Naive thymus-derived CD4-positive, alpha-beta T cell (primary cell): ENCODE measurements at regions of chr12 and their contacts with region 1.

Region 1: DNA sequence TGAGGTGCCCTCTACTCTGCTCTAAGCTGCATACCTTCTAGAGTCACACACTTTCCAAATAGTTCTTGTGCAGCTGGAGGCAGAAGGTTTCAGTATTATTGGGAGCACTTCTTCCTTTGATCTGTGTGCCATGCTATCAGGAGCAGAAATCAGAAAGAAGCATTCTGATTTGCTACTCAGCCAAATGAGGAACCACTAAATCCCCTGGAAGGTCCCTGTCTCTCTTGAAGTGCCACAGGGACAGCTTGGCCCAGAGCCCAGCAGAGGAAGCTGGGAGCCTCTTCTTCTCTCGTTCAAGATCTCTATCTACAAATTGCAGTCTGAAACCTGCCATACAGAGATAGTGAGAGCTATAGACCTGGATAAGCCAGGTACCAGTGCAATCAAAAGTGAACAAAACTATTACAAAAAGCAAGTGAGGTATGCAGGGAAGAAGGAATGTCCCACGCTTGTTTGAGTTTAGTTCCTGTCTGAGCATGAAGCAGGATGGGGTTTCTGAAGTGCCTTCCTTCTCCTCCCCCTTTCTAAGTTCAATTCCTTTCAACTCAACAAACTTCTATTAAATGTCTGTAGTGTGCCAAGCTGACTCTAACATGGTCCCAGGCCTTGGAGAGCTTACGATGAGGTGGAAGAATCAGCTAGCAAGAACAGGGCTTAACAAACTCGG is 100.9 kb upstream of the PARP11 start:
- DNase-seq: peak in 6 of 9 donors; percentile 23 to 38 (median 32)
- ATAC-seq: peak; percentile 48
- H3K4me3 ChIP-seq: no peak overlapping the region
- H3K4me3 Mint-ChIP-seq: peak overlapping the region; percentile 49 to 84 (median 78)
- H3K27ac ChIP-seq: peak overlapping the region; percentile 60
- H3K27ac Mint-ChIP-seq: peak overlapping the region; percentile 76 to 97 (median 89)
- H3K4me1 ChIP-seq: peaks cover 26 to 66% of the 10 kb centered on the region in 2 donors
- H3K4me1 Mint-ChIP-seq: peaks cover 45 to 84% (median 76%) of the 10 kb centered on the region in 7 donors
- H3K27me3 ChIP-seq: no peaks in the 10 kb centered on the region
- H3K27me3 Mint-ChIP-seq: no peaks in the 10 kb centered on the region

Region 2: DNA sequence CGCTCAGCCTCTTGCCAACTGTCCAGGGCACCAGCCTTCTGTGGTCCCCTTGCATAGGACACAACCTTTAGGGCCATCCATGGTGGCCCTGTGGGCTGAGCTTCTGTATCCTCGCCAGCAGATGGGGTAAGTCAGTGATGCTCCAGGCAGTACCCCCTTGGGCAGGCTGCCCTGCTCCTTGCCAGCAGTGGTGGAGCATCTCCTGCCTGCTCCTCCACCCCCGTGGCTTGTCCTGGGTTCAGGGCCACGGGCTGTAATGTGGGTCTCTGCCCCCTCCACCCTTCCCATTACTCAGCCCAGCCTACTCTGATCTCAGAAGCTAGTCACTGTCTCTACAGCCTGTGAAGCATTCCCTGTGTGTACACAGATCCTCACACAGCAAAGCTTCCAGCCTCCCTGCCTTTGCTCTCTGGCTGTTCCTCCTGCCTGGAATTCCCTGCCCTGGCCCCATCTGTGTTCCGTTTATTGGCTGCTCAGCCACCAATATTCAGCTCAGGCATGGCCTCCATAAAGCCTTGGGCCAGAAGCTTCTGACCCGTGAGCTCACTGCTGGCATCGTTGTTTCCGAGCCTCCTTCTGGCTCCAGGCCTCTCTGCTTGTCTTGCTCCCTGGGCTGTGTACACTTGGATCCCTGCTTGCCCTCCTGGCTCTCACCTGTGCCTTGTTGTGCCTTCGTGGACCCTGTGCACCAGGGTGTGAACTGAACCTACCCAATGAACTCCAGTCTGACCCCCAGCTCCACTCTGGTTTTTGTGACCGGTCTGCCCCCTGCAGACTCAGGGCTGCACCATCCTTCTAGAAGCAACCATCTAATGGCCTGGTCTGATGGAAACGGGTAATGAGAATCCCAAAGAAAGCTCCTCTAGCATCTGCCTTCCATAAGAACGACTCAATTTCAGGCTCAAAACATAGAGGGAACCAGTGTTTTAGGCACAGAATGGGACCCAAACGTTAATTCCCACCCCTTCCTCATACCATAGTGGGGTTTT is 660.1 kb before region 1 on chr12:
- CTCF ChIA-PET with region 1: no interaction called
- POLR2A ChIA-PET with region 1: no interaction called
- intact Hi-C with region 1: no loop called
- DNase-seq: peak in 3 of 9 donors; percentile 12 to 16 (median 16)
- ATAC-seq: no peak
- H3K4me3 ChIP-seq: no peak overlapping the region
- H3K4me3 Mint-ChIP-seq: no peak overlapping the region
- H3K27ac ChIP-seq: no peak overlapping the region
- H3K27ac Mint-ChIP-seq: peak overlapping the region in 1 of 9 donors; percentile 51
- H3K4me1 ChIP-seq: no peaks in the 10 kb centered on the region
- H3K4me1 Mint-ChIP-seq: no peaks in the 10 kb centered on the region
- H3K27me3 ChIP-seq: no peaks in the 10 kb centered on the region
- H3K27me3 Mint-ChIP-seq: peaks cover 0 to 8% (median 5%) of the 10 kb centered on the region in 5 donors

Region 3: GRCh38 chr12:4030929-4031702 is 57.0 kb after region 1 on chr12:
- CTCF ChIA-PET with region 1: no interaction called
- POLR2A ChIA-PET with region 1: interaction called, 10 read pairs
- intact Hi-C with region 1: loop called in 1 of 2 experiments (anchors 2 kb)
- DNase-seq: peak; percentile 62 to 83 (median 74)
- ATAC-seq: peak; percentile 95
- H3K4me3 ChIP-seq: peak overlapping the region; percentile 50
- H3K4me3 Mint-ChIP-seq: peak overlapping the region; percentile 60 to 87 (median 84)
- H3K27ac ChIP-seq: peak overlapping the region; percentile 75
- H3K27ac Mint-ChIP-seq: peak overlapping the region in 8 of 9 donors; percentile 60 to 92 (median 86)
- H3K4me1 ChIP-seq: peaks cover 13 to 33% of the 10 kb centered on the region in 2 donors
- H3K4me1 Mint-ChIP-seq: peaks cover 22 to 54% (median 47%) of the 10 kb centered on the region in 7 donors
- H3K27me3 ChIP-seq: no peaks in the 10 kb centered on the region
- H3K27me3 Mint-ChIP-seq: peaks cover 0 to 33% (median 0%) of the 10 kb centered on the region in 5 donors

Region 4: DNA sequence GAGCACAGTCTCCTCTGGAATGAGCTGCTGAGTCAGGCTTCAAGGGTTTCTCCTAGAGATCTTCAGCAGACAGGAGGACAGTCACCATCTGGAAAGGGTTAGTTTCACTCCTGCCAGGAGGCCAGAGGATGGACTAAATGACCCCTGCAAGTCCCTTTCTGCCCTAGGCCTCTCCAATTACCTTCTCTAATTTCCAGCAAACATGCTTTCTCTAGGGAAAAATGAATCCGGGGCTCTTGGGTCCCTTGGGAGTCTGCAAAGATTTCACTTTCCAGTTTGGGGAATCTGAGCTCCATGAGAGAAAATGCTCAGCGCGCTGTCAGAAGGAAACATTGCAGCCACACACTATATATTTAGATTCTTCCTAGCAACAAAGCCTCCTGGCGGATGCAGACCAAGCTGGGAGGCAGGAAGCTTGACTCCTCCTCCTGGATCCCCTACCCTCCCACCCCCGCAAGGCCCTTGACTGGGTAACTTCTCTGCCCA is 115.1 kb after region 1 on chr12:
- CTCF ChIA-PET with region 1: no interaction called
- POLR2A ChIA-PET with region 1: no interaction called
- intact Hi-C with region 1: no loop called
- DNase-seq: no peak
- ATAC-seq: no peak
- H3K4me3 ChIP-seq: no peak overlapping the region
- H3K4me3 Mint-ChIP-seq: no peak overlapping the region
- H3K27ac ChIP-seq: no peak overlapping the region
- H3K27ac Mint-ChIP-seq: no peak overlapping the region
- H3K4me1 ChIP-seq: no peaks in the 10 kb centered on the region
- H3K4me1 Mint-ChIP-seq: peaks cover 0 to 7% (median 0%) of the 10 kb centered on the region in 7 donors
- H3K27me3 ChIP-seq: no peaks in the 10 kb centered on the region
- H3K27me3 Mint-ChIP-seq: peaks cover 0 to 14% (median 0%) of the 10 kb centered on the region in 5 donors